ENCODE measurements at regions of chr1 and their contacts with region 1.

Region 1: DNA sequence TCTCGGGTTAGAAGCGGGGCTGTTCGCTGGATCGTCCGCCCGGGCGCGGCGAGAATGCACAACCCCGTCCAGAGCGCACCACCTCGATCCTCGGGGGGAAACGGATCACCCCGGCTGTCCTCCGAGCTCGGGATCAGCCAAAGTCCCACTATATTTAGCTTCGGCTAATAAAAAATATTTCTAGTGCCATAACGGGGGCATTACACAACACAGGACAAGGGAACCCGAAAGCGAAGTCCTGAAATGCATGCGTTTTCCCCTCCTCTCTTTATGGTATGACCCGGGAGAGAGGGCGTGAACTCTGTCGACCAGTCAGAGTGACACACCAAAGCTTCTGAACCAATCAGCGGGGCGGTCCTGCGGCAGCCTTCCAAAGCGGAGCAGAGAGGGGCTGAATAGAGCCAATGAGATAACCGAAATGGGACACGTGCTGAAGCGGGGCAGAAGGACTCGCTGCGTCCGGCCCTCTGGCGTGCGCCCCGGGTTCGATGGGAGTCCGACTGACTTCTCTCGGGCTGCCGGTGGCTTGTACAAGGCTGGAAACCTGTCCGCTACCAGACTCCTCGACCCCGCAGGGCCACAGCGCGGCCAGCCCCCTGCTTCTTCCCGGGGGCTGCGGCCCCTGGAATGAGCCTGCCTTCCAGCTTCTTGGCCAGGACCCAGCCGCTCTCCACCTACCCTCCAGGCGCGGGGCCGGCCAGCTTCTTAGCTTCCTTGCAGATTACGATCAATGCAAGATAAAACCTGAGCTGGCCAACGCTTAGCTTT is at the start of gene ALDH4A1:
- DNase-seq: peak; percentile 76
- ATAC-seq: peak; percentile 96
- H3K4me3 Mint-ChIP-seq: peak within 1 kb of the TSS; percentile 95
- H3K27ac Mint-ChIP-seq: peak within 1 kb of the TSS; percentile 99
- H3K4me1 Mint-ChIP-seq: peaks cover 26% of the 10 kb centered on the region
- H3K27me3 Mint-ChIP-seq: no peaks in the 10 kb centered on the region
- CTCF ChIP-seq: no peak
- total RNA-seq, gene ALDH4A1: 6.5 and 7.1 TPM in 2 replicates

Region 2: GRCh38 chr1:18913065-18913835 is 10.5 kb after region 1 on chr1:
- CTCF ChIA-PET with region 1: interaction called, 13 read pairs
- POLR2A ChIA-PET with region 1: interaction called, 6 read pairs
- intact Hi-C with region 1: no loop called
- DNase-seq: peak; percentile 73
- ATAC-seq: peak; percentile 93
- H3K4me3 Mint-ChIP-seq: no peak overlapping the region
- H3K27ac Mint-ChIP-seq: no peak overlapping the region
- H3K4me1 Mint-ChIP-seq: peaks cover 18% of the 10 kb centered on the region
- H3K27me3 Mint-ChIP-seq: no peaks in the 10 kb centered on the region
- CTCF ChIP-seq: no peak

Region 3: DNA sequence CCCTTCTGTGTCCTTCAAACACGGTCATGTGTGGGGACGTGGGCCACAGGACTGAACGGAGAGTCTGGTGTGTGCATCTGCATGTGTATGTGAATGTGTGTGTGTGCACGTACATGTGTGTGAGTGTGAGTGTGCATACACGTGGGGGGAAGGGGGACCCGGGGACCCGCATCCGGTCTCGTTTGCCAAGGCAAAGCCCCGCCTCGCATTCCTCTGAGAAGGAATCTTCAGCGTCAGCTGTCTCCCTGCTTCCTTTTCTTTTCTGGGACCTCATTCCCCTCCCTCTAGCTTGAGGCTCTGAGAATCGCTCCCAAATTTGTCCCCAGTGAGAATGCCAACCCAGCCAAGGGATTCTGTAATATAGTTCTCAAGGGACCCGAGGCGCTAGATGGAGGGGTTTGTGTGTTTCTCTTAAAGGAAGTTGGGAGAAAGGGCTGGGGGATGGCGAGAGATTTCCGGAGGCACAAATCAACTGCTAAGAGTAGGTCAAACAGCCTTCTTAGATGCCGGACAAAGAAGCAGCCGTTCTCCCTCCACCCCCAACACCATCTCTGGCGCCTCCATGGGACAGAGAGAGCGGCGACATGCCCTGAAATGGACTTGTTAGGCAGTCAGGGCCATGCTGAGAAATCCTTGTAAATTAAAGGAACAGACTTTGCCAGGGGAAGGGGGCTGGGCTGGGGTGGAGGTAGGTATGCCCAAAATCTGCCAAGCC is 47.1 kb after region 1 on chr1:
- CTCF ChIA-PET with region 1: interaction called, 190 read pairs
- POLR2A ChIA-PET with region 1: interaction called, 10 read pairs
- intact Hi-C with region 1: loop called (anchors 1 kb)
- DNase-seq: no peak
- ATAC-seq: no peak
- H3K4me3 Mint-ChIP-seq: peak overlapping the region; percentile 82
- H3K27ac Mint-ChIP-seq: peak overlapping the region; percentile 98
- H3K4me1 Mint-ChIP-seq: peaks cover 95% of the 10 kb centered on the region
- H3K27me3 Mint-ChIP-seq: no peaks in the 10 kb centered on the region
- CTCF ChIP-seq: no peak

Region 4: DNA sequence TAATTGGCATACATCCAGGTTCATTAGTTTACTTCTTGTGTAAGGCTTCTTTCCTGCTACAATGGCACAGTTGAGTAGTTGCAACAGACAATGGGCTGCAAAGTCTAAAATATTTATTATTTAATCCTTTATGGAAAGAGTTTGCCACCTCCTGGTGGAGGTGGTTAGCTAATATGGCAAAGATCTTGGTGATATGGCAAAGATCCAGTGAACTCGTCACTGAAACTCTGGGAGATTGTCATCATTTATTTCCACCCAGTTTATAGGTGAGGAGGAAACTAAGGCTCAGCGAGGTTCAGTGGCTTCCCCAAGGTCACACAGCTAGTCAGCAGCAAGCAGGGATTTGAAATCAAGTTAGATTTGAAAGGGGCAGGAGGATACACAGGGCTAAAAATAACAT is 69.8 kb after region 1 on chr1:
- CTCF ChIA-PET with region 1: interaction called, 216 read pairs
- POLR2A ChIA-PET with region 1: interaction called, 9 read pairs
- intact Hi-C with region 1: loop called (anchors 1 kb)
- DNase-seq: no peak
- ATAC-seq: peak; percentile 37
- H3K4me3 Mint-ChIP-seq: no peak overlapping the region
- H3K27ac Mint-ChIP-seq: no peak overlapping the region
- H3K4me1 Mint-ChIP-seq: no peaks in the 10 kb centered on the region
- H3K27me3 Mint-ChIP-seq: peaks cover 11% of the 10 kb centered on the region
- CTCF ChIP-seq: no peak

Region 5: GRCh38 chr1:19113697-19114092 is 211.0 kb after region 1 on chr1:
- CTCF ChIA-PET with region 1: interaction called, 12 read pairs
- POLR2A ChIA-PET with region 1: no interaction called
- intact Hi-C with region 1: loop called (anchors 1 kb)
- DNase-seq: no peak
- ATAC-seq: no peak
- H3K4me3 Mint-ChIP-seq: no peak overlapping the region
- H3K27ac Mint-ChIP-seq: no peak overlapping the region
- H3K4me1 Mint-ChIP-seq: no peaks in the 10 kb centered on the region
- H3K27me3 Mint-ChIP-seq: no peaks in the 10 kb centered on the region
- CTCF ChIP-seq: no peak

Region 6: DNA sequence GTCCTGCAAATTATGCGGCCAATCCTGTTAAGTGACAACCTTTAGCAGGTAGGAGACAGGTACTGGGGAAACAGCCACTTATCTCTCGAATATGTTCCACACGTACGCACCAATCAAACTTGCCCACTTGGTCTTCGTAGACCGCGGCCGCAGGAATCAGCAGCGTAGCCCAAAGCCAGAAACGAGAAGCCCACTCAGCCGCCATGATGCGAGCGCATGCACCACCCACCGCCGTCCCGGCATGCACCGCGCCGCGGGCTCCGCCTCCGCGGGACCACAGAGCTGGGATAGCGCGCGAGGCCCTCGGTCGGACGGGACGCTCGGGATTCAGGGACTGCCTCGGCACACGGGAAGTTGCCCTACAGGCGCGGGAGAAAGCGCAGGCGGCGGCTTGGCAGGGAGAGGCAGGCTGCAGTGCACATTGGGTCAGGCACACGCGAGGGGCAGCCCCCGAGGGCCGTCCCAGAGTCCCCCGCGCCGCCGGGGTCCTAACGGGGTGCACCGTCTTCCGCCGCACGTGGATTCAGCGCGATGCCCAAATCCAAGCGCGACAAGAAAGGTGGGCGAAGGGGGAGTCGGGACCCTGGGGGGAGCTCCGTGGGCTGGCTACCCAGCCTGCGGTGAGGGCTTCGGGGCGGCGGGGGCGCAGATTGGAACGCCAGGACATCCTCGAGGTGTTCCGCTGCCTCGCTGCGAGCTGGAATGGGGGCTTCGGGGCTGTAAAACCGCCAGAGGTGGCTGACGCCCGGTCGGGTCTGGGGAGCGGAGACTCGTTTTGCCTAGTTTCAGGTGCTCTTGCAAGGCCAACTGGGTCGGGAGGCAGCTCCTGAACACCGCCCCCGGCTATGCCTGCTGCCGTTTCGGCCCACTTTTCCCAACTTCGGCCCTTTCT is 348.8 kb after region 1 on chr1 and contains the starts of genes EMC1 and MRTO4:
- CTCF ChIA-PET with region 1: no interaction called
- POLR2A ChIA-PET with region 1: no interaction called
- intact Hi-C with region 1: loop called (anchors 1 kb)
- DNase-seq: peak; percentile 97
- ATAC-seq: peak; percentile 93
- H3K4me3 Mint-ChIP-seq: peak within 1 kb of the TSS; percentile 96
- H3K27ac Mint-ChIP-seq: peak within 1 kb of the TSS; percentile 92
- H3K4me1 Mint-ChIP-seq: peaks cover 32% of the 10 kb centered on the region
- H3K27me3 Mint-ChIP-seq: no peaks in the 10 kb centered on the region
- CTCF ChIP-seq: no peak
- total RNA-seq, gene EMC1: 40.0 and 42.7 TPM in 2 replicates
- total RNA-seq, gene MRTO4: 61.5 and 73.1 TPM in 2 replicates